GM10248 (cell line): ENCODE measurements at regions of chr1 and their contacts with region 1.

Region 1: DNA sequence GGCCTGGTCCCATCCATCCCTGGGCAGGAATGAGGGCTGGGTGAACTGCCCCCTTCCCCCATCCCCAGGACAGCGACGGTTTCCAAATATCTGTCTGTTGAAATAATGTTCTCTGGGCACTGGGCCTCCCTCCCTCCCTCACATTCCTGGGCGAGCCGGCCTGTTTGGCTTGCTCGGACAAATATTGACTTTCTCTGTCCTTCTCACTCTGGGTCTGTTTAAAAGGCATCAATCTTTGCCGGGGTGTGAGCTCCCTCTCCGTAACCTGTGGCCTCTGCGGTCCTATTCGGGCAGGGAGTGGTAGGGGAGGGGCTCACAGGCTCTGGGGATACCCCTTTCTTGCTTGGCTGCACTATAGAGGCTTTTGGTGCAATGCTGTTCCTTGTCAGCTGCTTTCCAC is 40.2 kb downstream of the FOXD2 start:
- DNase-seq: no peak
- CTCF ChIP-seq: no peak

Region 2: GRCh38 chr1:47465605-47466004 is 12.5 kb before region 1 on chr1:
- CTCF ChIA-PET with region 1: interaction called, 11 read pairs
- POLR2A ChIA-PET with region 1: no interaction called
- DNase-seq: no peak
- CTCF ChIP-seq: no peak